ENCODE measurements at regions of chr15 and their contacts with region 1.

Region 1: DNA sequence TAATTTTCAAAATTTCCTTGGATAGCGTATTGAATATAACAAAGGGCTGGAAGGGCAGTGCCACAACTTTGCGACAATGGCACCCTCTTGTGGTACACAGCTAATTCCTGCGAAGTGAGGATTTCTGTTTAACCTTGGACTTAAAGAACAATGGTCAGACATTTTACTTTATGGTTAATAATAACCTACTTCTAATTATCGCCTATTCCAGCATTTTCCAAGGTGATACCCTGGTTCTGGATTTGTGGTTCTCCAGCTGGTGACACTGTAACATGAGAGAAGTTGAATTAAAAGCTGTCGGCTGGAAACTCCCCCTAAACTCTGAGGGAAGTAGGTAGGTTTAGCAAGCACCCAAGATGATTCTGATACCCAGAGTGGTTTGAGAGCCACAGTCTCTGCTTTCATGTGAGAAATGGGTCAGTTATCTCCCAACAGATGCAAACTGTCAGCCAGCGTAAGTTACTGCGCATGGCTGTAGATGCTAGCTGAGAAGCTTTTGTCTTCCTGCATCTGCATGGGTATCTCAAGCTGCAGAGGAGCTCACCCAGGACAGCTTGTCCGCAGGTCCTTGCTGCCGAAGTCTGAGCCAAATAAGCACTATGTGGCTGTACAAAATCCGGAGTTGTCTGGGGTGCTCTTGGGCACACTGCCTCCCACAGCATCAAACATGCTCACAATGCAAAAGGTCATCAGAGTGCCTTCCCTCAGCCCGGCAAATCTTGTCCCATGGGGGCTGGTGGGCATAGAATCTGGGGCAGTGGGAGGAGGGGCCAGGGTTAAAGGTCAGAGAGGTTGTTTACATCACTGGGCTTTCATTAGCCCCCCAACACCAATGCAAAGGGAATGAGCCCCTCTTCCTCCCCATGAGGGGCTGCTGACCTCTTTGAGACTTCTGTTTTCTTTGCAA is 6.6 kb upstream of the CHSY1 start:
- DNase-seq: peak in 1 of 2 experiments; percentile 64
- H3K4me3 ChIP-seq: no peak overlapping the region
- H3K4me3 Mint-ChIP-seq: no peak overlapping the region
- H3K27ac Mint-ChIP-seq: no peak overlapping the region
- H3K4me1 ChIP-seq: no peaks in the 10 kb centered on the region
- H3K4me1 Mint-ChIP-seq: no peaks in the 10 kb centered on the region
- H3K27me3 ChIP-seq: no peaks in the 10 kb centered on the region
- H3K27me3 Mint-ChIP-seq: peaks cover 2% of the 10 kb centered on the region
- CTCF ChIP-seq: peak; percentile 70 to 84

Region 2: DNA sequence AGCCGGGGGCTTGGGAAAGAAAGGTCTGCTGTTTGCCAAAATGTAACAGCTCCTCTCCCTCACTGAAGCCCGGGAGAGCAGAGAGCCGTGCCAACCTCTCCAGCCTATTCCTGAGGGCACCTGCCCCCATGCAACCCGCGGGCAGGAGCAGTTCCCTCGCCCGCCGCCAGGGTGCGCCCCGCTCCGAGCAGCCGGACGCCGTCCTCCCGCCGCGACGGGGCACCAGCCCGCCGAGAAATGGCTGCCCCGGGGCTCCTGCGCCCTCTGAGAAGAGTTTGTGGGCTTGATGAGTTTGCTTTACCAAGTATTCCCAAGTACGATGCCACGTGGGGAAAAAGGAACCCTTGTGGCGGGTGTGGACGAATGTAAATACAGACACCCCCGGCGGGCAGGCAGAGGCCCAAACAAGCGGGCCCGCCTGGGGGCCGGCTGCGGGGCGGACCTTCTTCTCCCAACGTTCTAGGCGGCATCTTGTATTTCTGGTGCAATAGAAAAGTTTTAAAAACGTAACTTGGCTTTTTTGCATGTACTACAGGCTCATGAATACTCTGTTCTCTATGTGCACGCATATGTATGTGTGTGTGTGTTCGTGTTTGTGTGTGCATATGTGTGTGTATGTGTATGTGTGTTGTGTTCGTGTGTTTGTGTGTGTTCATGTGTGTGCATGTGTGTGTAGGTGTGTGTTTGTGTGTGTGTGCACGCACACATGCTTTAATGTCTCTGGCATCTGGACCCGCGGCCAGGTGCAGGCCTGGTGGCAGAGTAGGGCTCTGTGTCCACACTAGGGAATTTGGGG is 169.5 kb before region 1 on chr15:
- CTCF ChIA-PET with region 1: interaction called, 3 read pairs
- POLR2A ChIA-PET with region 1: no interaction called
- intact Hi-C with region 1: loop called (anchors 1 kb)
- DNase-seq: peak; percentile 52 to 83
- H3K4me3 ChIP-seq: no peak overlapping the region
- H3K4me3 Mint-ChIP-seq: no peak overlapping the region
- H3K27ac Mint-ChIP-seq: no peak overlapping the region
- H3K4me1 ChIP-seq: no peaks in the 10 kb centered on the region
- H3K4me1 Mint-ChIP-seq: peaks cover 6% of the 10 kb centered on the region
- H3K27me3 ChIP-seq: no peaks in the 10 kb centered on the region
- H3K27me3 Mint-ChIP-seq: no peaks in the 10 kb centered on the region
- CTCF ChIP-seq: peak; percentile 77 to 95

Measured in Caco-2 (cell line).